ENCODE measurements at regions of chr1 and their contacts with region 1.

Region 1: GRCh38 chr1:239898062-239898730 is 193.5 kb upstream of the FMN2 start:
- DNase-seq: peak; percentile 54 to 84
- ATAC-seq: peak; percentile 90 to 99 (median 99)
- H3K4me3 ChIP-seq: no peak overlapping the region
- H3K4me3 Mint-ChIP-seq: no peak overlapping the region
- H3K27ac ChIP-seq: no peak overlapping the region
- H3K27ac Mint-ChIP-seq: no peak overlapping the region
- H3K4me1 ChIP-seq: peaks cover 2% of the 10 kb centered on the region
- H3K4me1 Mint-ChIP-seq: peaks cover 5 to 6% of the 10 kb centered on the region in 2 donors
- H3K27me3 ChIP-seq: no peaks in the 10 kb centered on the region
- H3K27me3 Mint-ChIP-seq: peaks cover 11 to 15% of the 10 kb centered on the region in 2 donors
- CTCF ChIP-seq: peak; percentile 90

Region 2: GRCh38 chr1:239308701-239309333 is 589.4 kb before region 1 on chr1:
- intact Hi-C with region 1: loop called (anchors 2 kb)
- DNase-seq: peak in 1 of 2 donors; percentile 32
- ATAC-seq: peak in 1 of 3 donors; percentile 53
- H3K4me3 ChIP-seq: no peak overlapping the region
- H3K4me3 Mint-ChIP-seq: no peak overlapping the region
- H3K27ac ChIP-seq: no peak overlapping the region
- H3K27ac Mint-ChIP-seq: no peak overlapping the region
- H3K4me1 ChIP-seq: no peaks in the 10 kb centered on the region
- H3K4me1 Mint-ChIP-seq: no peaks in the 10 kb centered on the region
- H3K27me3 ChIP-seq: no peaks in the 10 kb centered on the region
- H3K27me3 Mint-ChIP-seq: no peaks in the 10 kb centered on the region
- CTCF ChIP-seq: peak; percentile 24

Region 3: DNA sequence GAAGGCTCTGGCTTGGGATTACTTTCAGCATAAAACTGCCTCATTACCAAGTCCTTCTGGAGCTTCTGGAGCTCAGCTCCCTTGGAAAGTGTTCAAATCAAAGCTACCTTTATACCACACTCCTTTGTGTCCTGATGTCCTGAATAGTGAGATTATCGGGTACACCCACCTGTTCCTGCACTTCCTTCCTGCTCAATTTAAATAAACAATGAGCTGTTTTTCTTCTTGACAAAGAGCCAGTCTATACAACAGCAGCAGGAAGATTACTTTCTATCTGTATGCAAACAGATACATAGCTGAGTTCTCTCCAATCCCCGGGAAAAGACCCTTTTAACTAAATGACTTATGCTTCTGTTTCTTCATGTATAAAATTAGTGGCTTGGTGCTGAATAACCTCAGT is 64.5 kb before region 1 on chr1:
- intact Hi-C with region 1: no loop called
- DNase-seq: no peak
- ATAC-seq: no peak
- H3K4me3 ChIP-seq: no peak overlapping the region
- H3K4me3 Mint-ChIP-seq: no peak overlapping the region
- H3K27ac ChIP-seq: no peak overlapping the region
- H3K27ac Mint-ChIP-seq: no peak overlapping the region
- H3K4me1 ChIP-seq: no peaks in the 10 kb centered on the region
- H3K4me1 Mint-ChIP-seq: no peaks in the 10 kb centered on the region
- H3K27me3 ChIP-seq: no peaks in the 10 kb centered on the region
- H3K27me3 Mint-ChIP-seq: peaks cover 0 to 8% of the 10 kb centered on the region in 2 donors
- CTCF ChIP-seq: no peak

Region 4: GRCh38 chr1:240027059-240027462 is 128.9 kb after region 1 on chr1:
- intact Hi-C with region 1: no loop called
- DNase-seq: peak in 1 of 2 donors; percentile 5
- ATAC-seq: peak in 2 of 3 donors; percentile 39 to 64
- H3K4me3 ChIP-seq: no peak overlapping the region
- H3K4me3 Mint-ChIP-seq: no peak overlapping the region
- H3K27ac ChIP-seq: no peak overlapping the region
- H3K27ac Mint-ChIP-seq: no peak overlapping the region
- H3K4me1 ChIP-seq: no peaks in the 10 kb centered on the region
- H3K4me1 Mint-ChIP-seq: no peaks in the 10 kb centered on the region
- H3K27me3 ChIP-seq: no peaks in the 10 kb centered on the region
- H3K27me3 Mint-ChIP-seq: peaks cover 4 to 6% of the 10 kb centered on the region in 2 donors
- CTCF ChIP-seq: no peak